ENCODE measurements at regions of chr12 and their contacts with region 1.

Region 1: DNA sequence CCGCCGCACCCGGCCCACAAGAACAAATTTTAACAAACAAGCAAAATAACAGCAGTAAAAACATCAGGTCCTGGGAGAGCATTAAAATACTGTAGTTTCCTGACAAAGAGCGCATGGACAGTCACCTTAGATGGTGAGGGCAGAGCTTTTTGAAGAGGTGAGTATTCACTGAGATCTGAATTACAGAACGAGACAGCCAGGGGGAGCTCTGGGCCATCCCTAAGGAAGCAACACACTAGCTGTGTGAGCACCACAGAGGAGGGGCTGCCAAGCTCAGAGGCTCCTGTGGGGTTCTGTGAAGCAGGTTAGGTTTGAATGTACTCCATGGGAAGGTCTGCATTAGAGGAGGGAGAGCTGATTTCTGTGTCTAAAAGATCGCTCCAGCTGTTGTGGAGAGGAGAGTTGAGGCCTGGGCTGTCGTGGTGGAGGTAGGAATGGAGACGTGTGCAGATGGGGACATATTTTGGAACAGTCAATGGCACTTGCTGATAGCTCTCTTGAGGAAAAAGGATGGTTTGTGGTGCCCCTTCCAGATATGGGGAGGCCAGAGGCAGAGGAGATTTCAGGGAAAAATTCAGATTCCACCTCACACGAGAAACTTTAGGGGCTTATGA is 72.9 kb downstream of the TRAFD1 start:
- DNase-seq: peak; percentile 49
- H3K4me3 ChIP-seq: no peak overlapping the region
- H3K27ac ChIP-seq: no peak overlapping the region
- H3K4me1 ChIP-seq: no peaks in the 10 kb centered on the region
- H3K27me3 ChIP-seq: no peaks in the 10 kb centered on the region
- CTCF ChIP-seq: peak; percentile 28 to 60 (median 56)
- POLR2A ChIP-seq: no peak

Region 2: GRCh38 chr12:112382232-112382796 is 184.1 kb after region 1 on chr12 and contains the start of gene HECTD4:
- intact Hi-C with region 1: loop called (anchors 5 kb)
- DNase-seq: peak; percentile 94
- H3K4me3 ChIP-seq: peak within 1 kb of the TSS; percentile 95
- H3K27ac ChIP-seq: peak within 1 kb of the TSS; percentile 75 to 85
- H3K4me1 ChIP-seq: no peaks in the 10 kb centered on the region
- H3K27me3 ChIP-seq: no peaks in the 10 kb centered on the region
- CTCF ChIP-seq: peak in 1 of 4 experiments; percentile 20
- POLR2A ChIP-seq: peak; percentile 93
- total RNA-seq, gene HECTD4: 50.6 to 73.4 TPM

Measured in prostate gland (tissue), 2 donors.